ENCODE measurements at regions of chr16 and their contacts with region 1.

Region 1: DNA sequence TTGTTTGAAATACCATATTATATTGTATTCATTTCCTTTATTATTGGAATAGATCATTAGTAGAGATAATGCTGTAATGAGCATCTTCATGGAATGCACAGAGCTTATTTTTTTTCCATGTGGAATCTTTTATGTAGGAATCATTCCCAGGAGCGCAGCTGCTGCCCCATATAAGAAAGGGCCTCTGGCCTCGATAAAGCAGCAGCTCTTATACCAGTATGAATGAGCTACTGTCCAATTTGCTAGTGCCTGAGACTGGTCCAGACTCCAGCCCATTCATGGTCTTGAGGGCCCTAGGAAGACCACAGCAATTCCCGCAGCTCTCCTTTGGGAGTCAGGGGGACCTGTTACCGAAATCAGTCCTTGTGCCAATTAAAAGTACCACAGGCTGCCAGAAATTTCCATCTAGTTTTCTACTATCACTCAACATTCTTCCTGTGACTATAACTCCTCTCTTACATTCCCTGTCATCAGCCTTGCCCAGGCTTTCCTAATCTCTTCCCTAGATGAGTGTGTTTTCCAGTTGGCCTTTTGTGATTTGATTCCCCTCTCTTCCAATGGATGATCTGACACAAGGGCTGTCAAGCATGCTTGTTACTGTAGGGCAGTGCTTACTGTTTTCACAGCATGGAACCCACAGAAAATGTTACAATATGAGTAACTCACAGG is 1.9 kb downstream of the ZNF843 start:
- DNase-seq: no peak
- ATAC-seq: no peak
- H3K4me3 ChIP-seq: no peak overlapping the region
- H3K4me3 Mint-ChIP-seq: no peak overlapping the region
- H3K27ac ChIP-seq: no peak overlapping the region
- H3K27ac Mint-ChIP-seq: no peak overlapping the region
- H3K4me1 ChIP-seq: peaks cover 10% of the 10 kb centered on the region
- H3K4me1 Mint-ChIP-seq: peaks cover 14 to 36% of the 10 kb centered on the region in 2 donors
- H3K27me3 ChIP-seq: no peaks in the 10 kb centered on the region
- H3K27me3 Mint-ChIP-seq: no peaks in the 10 kb centered on the region
- CTCF ChIP-seq: no peak

Region 2: GRCh38 chr16:30984669-30985400 is 455.8 kb before region 1 on chr16 and contains the start of gene HSD3B7:
- intact Hi-C with region 1: loop called (anchors 2 kb)
- DNase-seq: peak; percentile 76 to 84
- ATAC-seq: peak; percentile 75 to 92 (median 82)
- H3K4me3 ChIP-seq: no peak within 1 kb of the TSS
- H3K4me3 Mint-ChIP-seq: no peak within 1 kb of the TSS
- H3K27ac ChIP-seq: no peak within 1 kb of the TSS
- H3K27ac Mint-ChIP-seq: no peak within 1 kb of the TSS
- H3K4me1 ChIP-seq: peaks cover 9% of the 10 kb centered on the region
- H3K4me1 Mint-ChIP-seq: peaks cover 0 to 20% of the 10 kb centered on the region in 2 donors
- H3K27me3 ChIP-seq: no peaks in the 10 kb centered on the region
- H3K27me3 Mint-ChIP-seq: no peaks in the 10 kb centered on the region
- CTCF ChIP-seq: peak; percentile 85
- total RNA-seq, gene HSD3B7: 0.26 to 2.1 (median 0.39) TPM

Region 3: GRCh38 chr16:31142109-31143010 is 298.3 kb before region 1 on chr16:
- intact Hi-C with region 1: loop called (anchors 5 kb)
- DNase-seq: peak; percentile 86 to 98
- ATAC-seq: peak; percentile 86 to 97 (median 88)
- H3K4me3 ChIP-seq: peak overlapping the region; percentile 6
- H3K4me3 Mint-ChIP-seq: peak overlapping the region; percentile 75
- H3K27ac ChIP-seq: peak overlapping the region; percentile 62
- H3K27ac Mint-ChIP-seq: peak overlapping the region; percentile 76 to 82
- H3K4me1 ChIP-seq: peaks cover 19% of the 10 kb centered on the region
- H3K4me1 Mint-ChIP-seq: peaks cover 15 to 22% of the 10 kb centered on the region in 2 donors
- H3K27me3 ChIP-seq: no peaks in the 10 kb centered on the region
- H3K27me3 Mint-ChIP-seq: no peaks in the 10 kb centered on the region
- CTCF ChIP-seq: peak; percentile 87

Region 4: GRCh38 chr16:31202414-31203375 is 238.0 kb before region 1 on chr16 and contains the start of gene PYCARD:
- intact Hi-C with region 1: loop called (anchors 5 kb)
- DNase-seq: peak; percentile 43 to 60
- ATAC-seq: peak; percentile 37 to 59 (median 55)
- H3K4me3 ChIP-seq: peak within 1 kb of the TSS; percentile 67
- H3K4me3 Mint-ChIP-seq: peak within 1 kb of the TSS; percentile 91
- H3K27ac ChIP-seq: peak within 1 kb of the TSS; percentile 67
- H3K27ac Mint-ChIP-seq: peak within 1 kb of the TSS; percentile 87 to 89
- H3K4me1 ChIP-seq: peaks cover 41% of the 10 kb centered on the region
- H3K4me1 Mint-ChIP-seq: peaks cover 45 to 63% of the 10 kb centered on the region in 2 donors
- H3K27me3 ChIP-seq: no peaks in the 10 kb centered on the region
- H3K27me3 Mint-ChIP-seq: no peaks in the 10 kb centered on the region
- CTCF ChIP-seq: no peak
- total RNA-seq, gene PYCARD: 29.7 to 38.1 (median 37.6) TPM

Region 5: DNA sequence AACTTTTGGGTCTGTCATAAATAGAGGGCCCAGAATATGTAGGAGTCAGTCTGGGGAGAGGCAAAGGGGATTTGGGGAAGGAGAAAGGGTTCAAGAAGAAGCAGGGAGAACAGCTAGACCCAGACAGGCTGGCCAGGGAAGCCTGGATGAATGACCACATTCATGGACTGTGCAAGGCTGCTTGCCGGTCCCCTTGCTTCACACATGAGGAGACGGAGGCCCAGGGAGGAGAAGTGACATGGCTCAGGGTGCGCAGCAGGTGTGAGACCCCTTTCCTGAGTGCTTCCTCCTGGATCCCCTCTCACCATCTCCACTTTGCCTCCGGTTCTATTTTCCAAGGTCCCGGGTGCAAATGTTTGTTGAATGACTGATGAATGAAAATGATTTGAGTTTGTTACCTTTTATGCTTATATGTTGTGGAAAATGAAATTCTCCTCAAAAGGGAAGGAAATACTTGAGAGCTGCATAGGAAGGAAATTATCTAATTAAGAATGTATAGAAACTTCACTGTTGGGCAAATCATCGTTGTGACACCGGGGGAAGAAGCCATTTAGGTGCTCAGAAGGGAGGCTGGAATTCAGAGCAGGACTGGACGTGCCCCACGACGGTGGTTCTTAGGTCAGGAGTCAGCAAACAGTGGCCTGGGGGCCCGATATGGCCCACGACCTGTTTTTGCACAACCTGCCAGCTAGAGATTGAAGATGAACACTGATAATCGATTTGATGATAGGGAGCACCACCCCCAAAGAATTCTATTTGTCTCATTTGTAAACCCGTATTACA is 180.3 kb before region 1 on chr16:
- intact Hi-C with region 1: loop called (anchors 5 kb)
- DNase-seq: no peak
- ATAC-seq: peak in 1 of 3 donors; percentile 33
- H3K4me3 ChIP-seq: peak overlapping the region; percentile 64
- H3K4me3 Mint-ChIP-seq: peak overlapping the region; percentile 99
- H3K27ac ChIP-seq: peak overlapping the region; percentile 53
- H3K27ac Mint-ChIP-seq: peak overlapping the region; percentile 84 to 91
- H3K4me1 ChIP-seq: peaks cover 63% of the 10 kb centered on the region
- H3K4me1 Mint-ChIP-seq: peaks cover 42 to 52% of the 10 kb centered on the region in 2 donors
- H3K27me3 ChIP-seq: no peaks in the 10 kb centered on the region
- H3K27me3 Mint-ChIP-seq: no peaks in the 10 kb centered on the region
- CTCF ChIP-seq: no peak

Region 6: DNA sequence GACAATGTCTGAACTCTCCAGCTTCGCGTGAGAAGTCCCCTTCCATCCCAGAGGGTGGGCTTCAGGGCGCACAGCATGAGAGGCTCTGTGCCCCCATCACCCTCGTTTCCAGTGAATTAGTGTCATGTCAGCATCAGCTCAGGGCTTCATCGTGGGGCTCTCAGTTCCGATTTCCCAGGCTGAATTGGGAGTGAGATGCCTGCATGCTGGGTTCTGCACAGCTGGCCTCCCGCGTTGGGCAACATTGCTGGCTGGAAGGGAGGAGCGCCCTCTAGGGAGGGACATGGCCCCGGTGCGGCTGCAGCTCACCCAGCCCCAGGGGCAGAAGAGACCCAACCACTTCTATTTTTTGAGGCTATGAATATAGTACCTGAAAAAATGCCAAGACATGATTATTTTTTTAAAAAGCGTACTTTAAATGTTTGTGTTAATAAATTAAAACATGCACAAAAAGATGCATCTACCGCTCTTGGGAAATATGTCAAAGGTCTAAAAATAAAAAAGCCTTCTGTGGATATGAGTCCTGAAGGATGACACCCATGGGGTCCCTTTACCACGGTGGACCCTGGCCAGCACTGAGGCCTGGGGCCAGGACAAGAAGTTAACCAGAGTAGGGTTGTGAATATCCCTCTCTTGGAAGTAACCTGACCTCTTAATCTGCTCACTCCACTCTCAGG is 58.0 kb before region 1 on chr16:
- intact Hi-C with region 1: loop called (anchors 5 kb)
- DNase-seq: peak; percentile 68 to 80
- ATAC-seq: peak; percentile 65 to 85 (median 71)
- H3K4me3 ChIP-seq: no peak overlapping the region
- H3K4me3 Mint-ChIP-seq: peak overlapping the region; percentile 25
- H3K27ac ChIP-seq: no peak overlapping the region
- H3K27ac Mint-ChIP-seq: no peak overlapping the region
- H3K4me1 ChIP-seq: peaks cover 37% of the 10 kb centered on the region
- H3K4me1 Mint-ChIP-seq: peaks cover 23 to 28% of the 10 kb centered on the region in 2 donors
- H3K27me3 ChIP-seq: no peaks in the 10 kb centered on the region
- H3K27me3 Mint-ChIP-seq: peaks cover 0 to 6% of the 10 kb centered on the region in 2 donors
- CTCF ChIP-seq: peak; percentile 90